Activated T-helper 1 cell treated with anti-CD3 and anti-CD28 coated beads, Interleukin-12 subunit alpha, Interleukin-12 subunit beta, Interleukin-2, Interleukin-4 antibody, amounts not matched to agents 30 ng/mL and 10 ng/mL and 1 ng/mL, durations not matched to agents 14 hours and 24 hours and 36 hours (primary cell): ENCODE measurements at regions of chr19 and their contacts with region 1.

Region 1: GRCh38 chr19:49533551-49534488 is 6.0 kb downstream of the RCN3 start:
- DNase-seq: peak; percentile 79
- H3K4me3 Mint-ChIP-seq: peak overlapping the region; percentile 86
- H3K27ac Mint-ChIP-seq: peak overlapping the region; percentile 85
- H3K4me1 Mint-ChIP-seq: peaks cover 21% of the 10 kb centered on the region
- H3K27me3 Mint-ChIP-seq: peaks cover 9% of the 10 kb centered on the region

Region 2: GRCh38 chr19:49502866-49503581 is 30.8 kb before region 1 on chr19:
- intact Hi-C with region 1: loop called (anchors 1 kb)
- DNase-seq: peak; percentile 56
- H3K4me3 Mint-ChIP-seq: no peak overlapping the region
- H3K27ac Mint-ChIP-seq: no peak overlapping the region
- H3K4me1 Mint-ChIP-seq: peaks cover 54% of the 10 kb centered on the region
- H3K27me3 Mint-ChIP-seq: no peaks in the 10 kb centered on the region

Region 3: GRCh38 chr19:49555600-49556411 is 22.0 kb after region 1 on chr19:
- intact Hi-C with region 1: loop called (anchors 2 kb)
- DNase-seq: peak; percentile 73
- H3K4me3 Mint-ChIP-seq: peak overlapping the region; percentile 15
- H3K27ac Mint-ChIP-seq: peak overlapping the region; percentile 89
- H3K4me1 Mint-ChIP-seq: peaks cover 65% of the 10 kb centered on the region
- H3K27me3 Mint-ChIP-seq: no peaks in the 10 kb centered on the region

Region 4: DNA sequence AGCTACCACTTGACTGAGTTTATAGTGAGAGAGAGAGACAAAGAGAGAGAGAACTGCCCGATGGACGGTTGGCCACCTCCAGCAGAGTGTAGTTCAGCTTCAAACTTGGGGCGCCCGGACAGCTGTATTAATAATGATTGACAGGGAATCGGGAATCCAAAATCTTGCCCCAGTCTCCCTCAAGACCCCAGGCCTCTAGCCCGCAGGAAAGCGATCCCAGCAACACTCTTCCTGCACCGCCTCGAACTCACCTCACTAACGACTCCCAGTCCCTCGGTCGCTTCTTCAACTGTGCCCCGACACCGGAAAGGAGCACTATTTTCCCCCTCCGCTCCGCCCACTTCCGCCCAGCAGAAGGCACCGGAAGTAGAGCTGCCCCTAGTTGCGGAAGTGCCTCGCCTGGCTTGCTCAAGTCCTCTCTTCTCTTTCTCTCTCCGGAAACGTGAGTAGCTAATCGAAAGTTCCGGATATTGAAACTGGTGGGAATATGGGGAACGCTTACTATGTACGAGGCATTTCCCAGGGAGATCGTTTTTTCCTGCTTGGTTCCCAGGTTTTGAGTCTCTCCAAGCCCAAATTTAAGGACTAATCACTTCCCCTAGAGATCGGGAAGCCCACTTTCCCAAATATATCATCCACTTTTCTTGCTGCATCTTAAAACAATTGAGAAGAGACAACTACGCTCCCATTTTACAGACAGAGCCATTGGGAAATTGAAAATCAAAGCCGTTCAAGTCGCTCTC is 46.6 kb after region 1 on chr19 and contains the start of gene NOSIP:
- intact Hi-C with region 1: loop called (anchors 2 kb)
- DNase-seq: peak; percentile 94
- H3K4me3 Mint-ChIP-seq: peak within 1 kb of the TSS; percentile 93
- H3K27ac Mint-ChIP-seq: peak within 1 kb of the TSS; percentile 86
- H3K4me1 Mint-ChIP-seq: peaks cover 30% of the 10 kb centered on the region
- H3K27me3 Mint-ChIP-seq: no peaks in the 10 kb centered on the region
- total RNA-seq, gene NOSIP: 72.1 and 77.5 TPM in 2 replicates

Region 5: DNA sequence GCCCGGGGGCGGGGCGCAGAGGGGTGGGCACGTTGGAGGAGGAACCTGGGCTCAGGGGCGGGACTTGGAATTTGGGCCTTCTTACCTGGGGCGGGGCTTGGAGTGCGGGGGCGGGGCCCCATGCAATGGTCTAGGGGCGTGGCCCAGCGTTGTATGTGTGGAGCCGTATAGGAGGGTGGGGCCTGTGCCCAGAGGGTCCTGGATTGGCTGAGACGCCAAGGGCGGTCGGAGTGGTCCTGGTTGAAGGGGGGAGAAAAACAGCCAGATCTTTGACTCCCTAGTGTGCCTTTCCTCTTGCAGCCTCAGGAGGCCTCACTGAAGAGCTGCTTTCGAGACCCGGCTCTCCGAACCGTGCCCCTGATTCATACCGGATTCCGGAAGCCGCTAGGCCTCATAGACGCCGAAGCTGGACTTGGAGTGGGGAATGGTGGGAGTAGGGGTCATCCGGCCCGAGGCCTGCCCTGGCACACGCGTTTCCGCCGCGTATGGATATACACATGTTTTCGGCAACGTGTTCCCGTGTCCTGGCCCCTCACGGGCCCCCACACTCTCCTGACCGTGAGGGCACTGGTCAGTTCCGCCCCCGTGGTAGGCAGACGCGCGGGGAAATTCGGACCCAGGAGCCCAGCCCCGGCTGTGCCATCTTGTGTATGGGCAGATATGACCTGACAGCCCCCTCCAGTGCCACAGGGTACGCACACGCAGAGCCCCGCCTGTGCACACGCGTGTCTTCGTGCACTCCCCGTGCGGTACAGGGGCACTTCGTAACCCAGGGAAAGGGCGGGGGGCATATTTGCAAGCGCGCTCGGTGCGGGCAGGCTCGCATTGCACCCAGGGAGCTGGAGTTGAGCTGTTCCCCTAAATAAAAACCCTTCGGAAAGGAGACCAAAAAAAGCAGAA is 56.5 kb after region 1 on chr19:
- intact Hi-C with region 1: loop called (anchors 2 kb)
- DNase-seq: peak; percentile 93
- H3K4me3 Mint-ChIP-seq: peak overlapping the region; percentile 88
- H3K27ac Mint-ChIP-seq: peak overlapping the region; percentile 84
- H3K4me1 Mint-ChIP-seq: peaks cover 40% of the 10 kb centered on the region
- H3K27me3 Mint-ChIP-seq: peaks cover 10% of the 10 kb centered on the region

Region 6: GRCh38 chr19:49718511-49718910 is 184.7 kb after region 1 on chr19:
- intact Hi-C with region 1: no loop called
- DNase-seq: no peak
- H3K4me3 Mint-ChIP-seq: no peak overlapping the region
- H3K27ac Mint-ChIP-seq: no peak overlapping the region
- H3K4me1 Mint-ChIP-seq: peaks cover 7% of the 10 kb centered on the region
- H3K27me3 Mint-ChIP-seq: peaks cover 3% of the 10 kb centered on the region

Region 7: GRCh38 chr19:49801966-49802690 is 268.3 kb after region 1 on chr19:
- intact Hi-C with region 1: no loop called
- DNase-seq: no peak
- H3K4me3 Mint-ChIP-seq: no peak overlapping the region
- H3K27ac Mint-ChIP-seq: no peak overlapping the region
- H3K4me1 Mint-ChIP-seq: peaks cover under 1% of the 10 kb centered on the region
- H3K27me3 Mint-ChIP-seq: no peaks in the 10 kb centered on the region